Activated CD4-positive, alpha-beta memory T cell treated with anti-CD3 and anti-CD28 coated beads for 36 hours (primary cell): ENCODE measurements at regions of chr11 and their contacts with region 1.

Region 1: DNA sequence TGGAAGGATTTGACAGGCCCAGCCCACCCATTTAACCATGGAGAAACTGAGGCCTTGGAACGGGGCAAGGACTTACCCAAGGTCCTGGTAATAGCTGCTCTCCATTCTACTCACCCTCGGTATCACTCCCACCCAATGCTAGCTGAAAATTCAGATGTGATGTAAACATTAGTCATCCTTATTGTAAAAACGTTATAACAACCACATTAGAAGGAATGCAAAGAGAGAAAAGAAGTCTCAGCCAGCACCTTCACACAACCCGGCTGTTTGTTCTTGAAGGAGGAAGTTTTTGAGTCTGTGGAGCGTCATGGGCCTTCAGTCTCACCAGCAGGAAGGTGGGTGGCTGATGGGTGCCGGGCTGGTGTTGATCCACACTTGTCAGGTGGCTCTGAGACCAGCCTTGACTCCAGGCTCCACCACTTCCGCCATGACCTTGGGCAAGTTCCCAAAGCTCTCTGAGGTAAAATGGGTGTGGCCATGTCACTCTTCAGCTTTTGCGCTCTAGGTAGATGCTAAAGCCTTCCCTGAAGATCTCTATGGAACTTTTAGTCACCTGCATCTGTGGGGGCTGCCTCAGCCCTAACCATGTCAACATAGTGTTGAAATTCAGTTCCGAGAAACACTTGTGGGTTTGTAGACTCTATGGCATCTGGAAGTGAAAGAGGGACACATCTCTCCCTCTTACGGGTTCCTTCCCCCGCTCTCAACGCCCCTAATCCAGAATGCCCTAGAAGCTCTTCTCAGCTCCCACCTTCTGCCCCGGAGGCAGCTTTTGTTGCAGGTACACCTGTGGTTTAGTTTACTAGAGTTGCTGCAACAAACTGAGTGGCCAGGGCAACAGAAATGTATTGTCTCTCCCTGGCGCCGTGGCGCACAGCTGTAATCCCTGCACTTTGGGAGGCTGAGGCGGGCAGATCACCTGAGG is 14.8 kb downstream of the CD6 start:
- DNase-seq: peak; percentile 97
- H3K4me3 Mint-ChIP-seq: peak overlapping the region; percentile 84
- H3K27ac Mint-ChIP-seq: peak overlapping the region; percentile 99
- H3K4me1 Mint-ChIP-seq: peaks cover 91% of the 10 kb centered on the region
- H3K27me3 Mint-ChIP-seq: no peaks in the 10 kb centered on the region

Region 2: DNA sequence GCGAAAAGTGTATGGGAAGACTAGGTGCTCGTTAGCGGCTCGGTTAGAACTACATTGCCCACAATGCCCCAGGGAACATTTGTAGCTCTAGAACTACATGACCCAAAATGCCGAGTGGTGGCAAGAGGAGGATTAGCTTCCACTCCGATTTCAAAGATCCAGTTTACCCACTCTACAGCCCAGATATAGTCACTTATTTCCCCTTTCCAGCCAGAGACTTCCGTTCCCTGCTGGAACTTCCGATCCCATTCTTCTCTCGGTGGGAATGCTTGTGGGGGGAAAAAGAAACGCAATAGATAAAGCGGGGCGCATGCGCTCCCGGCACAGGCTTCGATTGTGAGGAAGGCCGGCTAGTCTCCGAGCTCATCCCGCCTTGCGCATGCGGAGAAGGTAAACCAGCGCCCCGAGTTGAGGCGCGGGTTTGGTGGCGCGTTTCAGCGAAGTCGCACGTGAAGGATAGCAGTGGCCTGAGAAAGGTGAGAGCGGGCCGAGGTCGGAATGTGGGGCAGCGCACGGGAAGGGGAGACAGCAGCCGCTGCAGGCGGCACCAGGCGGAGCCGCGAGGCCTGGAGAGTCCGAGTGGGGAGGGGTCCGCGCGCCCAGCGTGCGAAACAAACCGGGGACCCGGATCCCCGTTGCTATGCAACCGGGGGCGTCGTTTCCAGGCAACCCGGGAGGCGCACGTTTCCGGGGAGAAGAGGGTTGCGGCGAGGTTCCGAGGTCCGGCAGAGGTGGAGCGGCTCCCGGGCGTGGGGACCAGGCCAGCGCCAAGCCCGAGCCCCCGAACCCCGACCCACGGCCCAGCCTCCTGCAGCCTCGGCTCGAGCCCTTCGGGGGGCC is 72.2 kb before region 1 on chr11 and contains the start of gene TMEM109:
- CTCF ChIA-PET with region 1: interaction called, 3 read pairs
- POLR2A ChIA-PET with region 1: interaction called, 7 read pairs
- intact Hi-C with region 1: loop called (anchors 2 kb)
- DNase-seq: peak; percentile 92
- H3K4me3 Mint-ChIP-seq: peak within 1 kb of the TSS; percentile 92
- H3K27ac Mint-ChIP-seq: peak within 1 kb of the TSS; percentile 91
- H3K4me1 Mint-ChIP-seq: peaks cover 56% of the 10 kb centered on the region
- H3K27me3 Mint-ChIP-seq: no peaks in the 10 kb centered on the region
- total RNA-seq, gene TMEM109: 101 to 106 TPM

Region 3: DNA sequence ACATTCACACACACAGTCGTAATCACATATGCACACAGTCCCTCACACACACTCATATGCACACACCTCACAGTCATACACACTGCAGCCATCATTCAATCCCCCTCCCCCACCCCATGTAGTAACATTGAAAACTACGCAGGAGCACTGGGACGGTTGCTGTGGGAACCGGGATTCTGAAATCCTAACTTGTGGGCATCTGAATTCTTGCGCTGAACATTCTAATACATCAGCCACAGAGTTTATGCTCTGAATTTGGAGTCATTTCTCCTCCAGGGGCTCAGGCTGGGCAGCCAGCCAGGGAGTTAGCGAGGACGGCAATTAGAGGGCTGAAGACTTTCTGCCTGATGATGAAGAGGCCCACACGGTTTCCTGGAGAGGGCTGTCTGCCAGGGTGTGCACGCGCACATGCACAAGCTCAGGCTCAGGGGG is 17.9 kb after region 1 on chr11:
- CTCF ChIA-PET with region 1: no interaction called
- POLR2A ChIA-PET with region 1: interaction called, 44 read pairs
- intact Hi-C with region 1: loop called (anchors 2 kb)
- DNase-seq: peak; percentile 75
- H3K4me3 Mint-ChIP-seq: peak overlapping the region; percentile 75
- H3K27ac Mint-ChIP-seq: peak overlapping the region; percentile 97
- H3K4me1 Mint-ChIP-seq: peaks cover 82% of the 10 kb centered on the region
- H3K27me3 Mint-ChIP-seq: no peaks in the 10 kb centered on the region

Region 4: DNA sequence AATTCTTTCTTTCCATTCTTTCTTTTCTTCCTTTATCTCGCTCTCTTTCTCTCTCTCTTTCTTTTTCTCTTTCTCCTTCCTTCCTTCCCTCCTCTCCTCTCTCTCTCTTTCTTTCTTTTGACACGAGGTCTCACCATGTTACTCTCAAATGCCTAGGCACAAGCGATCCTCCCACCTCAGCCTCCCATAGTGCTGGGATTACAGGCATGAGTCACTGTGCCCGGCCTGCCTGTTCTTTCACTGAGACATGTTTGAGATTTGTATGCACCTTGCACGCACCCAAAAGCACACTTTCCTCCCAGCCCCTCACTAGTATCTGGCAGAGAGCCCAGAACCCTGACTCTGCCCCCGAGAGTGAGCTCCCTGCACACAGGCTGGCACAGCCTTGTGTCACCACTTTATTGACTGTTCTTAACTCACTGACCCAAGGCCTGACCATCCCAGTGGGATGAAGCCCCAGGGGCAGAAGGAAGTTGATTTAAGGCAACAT is 42.1 kb after region 1 on chr11:
- CTCF ChIA-PET with region 1: no interaction called
- POLR2A ChIA-PET with region 1: interaction called, 36 read pairs
- intact Hi-C with region 1: loop called (anchors 2 kb)
- DNase-seq: peak; percentile 88
- H3K4me3 Mint-ChIP-seq: peak overlapping the region; percentile 83
- H3K27ac Mint-ChIP-seq: peak overlapping the region; percentile 96
- H3K4me1 Mint-ChIP-seq: peaks cover 77% of the 10 kb centered on the region
- H3K27me3 Mint-ChIP-seq: no peaks in the 10 kb centered on the region

Region 5: DNA sequence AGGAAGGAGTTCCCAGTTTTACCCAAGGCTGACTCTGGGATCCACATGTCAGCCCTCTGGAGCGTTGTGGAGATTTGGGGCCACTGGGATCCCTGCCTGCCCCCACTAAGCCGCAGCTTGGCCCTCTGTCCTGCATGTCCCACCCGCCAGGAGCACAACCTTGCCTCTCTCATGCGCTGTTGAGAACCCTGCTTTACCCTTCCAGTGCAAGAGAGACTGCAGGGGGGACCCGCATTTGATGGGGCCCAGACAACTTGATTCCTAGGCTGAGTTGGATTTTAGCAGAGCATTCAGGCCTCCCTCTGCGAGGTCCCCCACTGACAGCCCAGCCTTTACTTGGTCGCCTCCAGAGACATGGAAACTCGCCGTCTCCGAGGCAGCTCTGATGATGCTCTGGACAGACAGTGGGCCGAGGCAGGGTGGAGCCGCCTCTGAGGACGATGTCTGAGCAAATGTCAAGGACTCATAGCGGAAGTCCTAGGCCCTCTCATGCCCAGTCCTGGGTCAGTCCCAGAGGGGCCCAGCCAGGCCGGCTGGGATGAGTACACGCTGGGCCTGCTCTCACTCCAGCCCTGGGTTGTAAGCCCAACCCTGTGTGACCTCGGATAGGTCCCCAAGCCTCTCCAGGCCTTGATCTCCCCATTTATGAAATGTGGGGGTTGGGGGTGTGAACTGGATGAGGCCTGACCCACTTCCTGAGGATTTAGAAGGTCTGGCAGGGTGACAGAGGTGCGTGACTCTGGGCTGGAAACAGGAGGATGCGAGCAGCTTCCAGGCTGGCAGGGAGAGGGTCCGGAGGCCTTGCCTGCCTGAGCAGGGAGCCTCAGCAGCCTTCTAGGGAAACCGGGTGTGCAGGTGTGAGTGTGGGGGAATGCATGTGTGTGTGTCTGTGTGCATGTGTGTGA is 116.7 kb after region 1 on chr11:
- CTCF ChIA-PET with region 1: no interaction called
- POLR2A ChIA-PET with region 1: interaction called, 7 read pairs
- intact Hi-C with region 1: loop called (anchors 2 kb)
- DNase-seq: peak; percentile 51
- H3K4me3 Mint-ChIP-seq: no peak overlapping the region
- H3K27ac Mint-ChIP-seq: no peak overlapping the region
- H3K4me1 Mint-ChIP-seq: peaks cover 28% of the 10 kb centered on the region
- H3K27me3 Mint-ChIP-seq: no peaks in the 10 kb centered on the region